PC-9 (cell line): ENCODE measurements at regions of chr18 and their contacts with region 1.

Region 1: GRCh38 chr18:1104181-1104881 is 199.7 kb downstream of the ADCYAP1 start:
- DNase-seq: no peak
- H3K4me3 ChIP-seq: no peak overlapping the region
- H3K27ac ChIP-seq: no peak overlapping the region
- H3K4me1 ChIP-seq: no peaks in the 10 kb centered on the region
- H3K27me3 ChIP-seq: no peaks in the 10 kb centered on the region
- CTCF ChIP-seq: no peak

Region 2: GRCh38 chr18:1018181-1018681 is 86.1 kb before region 1 on chr18:
- CTCF ChIA-PET with region 1: no interaction called
- POLR2A ChIA-PET with region 1: no interaction called
- intact Hi-C with region 1: no loop called
- DNase-seq: no peak
- H3K4me3 ChIP-seq: no peak overlapping the region
- H3K27ac ChIP-seq: no peak overlapping the region
- H3K4me1 ChIP-seq: peaks cover 10% of the 10 kb centered on the region
- H3K27me3 ChIP-seq: no peaks in the 10 kb centered on the region
- CTCF ChIP-seq: no peak

Region 3: DNA sequence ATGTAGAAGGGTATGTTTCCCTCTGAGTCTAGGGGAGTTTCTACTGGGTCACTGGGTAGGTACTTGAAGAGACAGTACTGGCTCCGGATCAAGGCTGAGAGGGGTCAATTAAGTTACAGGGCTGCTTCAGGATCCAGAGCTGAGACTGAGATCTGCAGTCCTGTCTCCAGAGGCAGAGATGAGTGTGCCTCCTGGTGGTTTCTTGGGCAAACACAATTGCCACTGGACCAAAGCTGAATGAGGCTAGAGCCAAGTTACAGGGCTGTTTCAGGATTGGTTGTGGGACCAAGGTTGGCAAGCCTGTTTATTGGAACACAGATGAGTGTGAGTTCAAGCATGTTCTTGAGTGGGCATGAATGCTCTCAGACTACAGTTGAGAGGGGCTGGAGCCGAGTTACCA is 41.7 kb before region 1 on chr18:
- CTCF ChIA-PET with region 1: no interaction called
- POLR2A ChIA-PET with region 1: no interaction called
- intact Hi-C with region 1: no loop called
- DNase-seq: no peak
- H3K4me3 ChIP-seq: no peak overlapping the region
- H3K27ac ChIP-seq: no peak overlapping the region
- H3K4me1 ChIP-seq: no peaks in the 10 kb centered on the region
- H3K27me3 ChIP-seq: no peaks in the 10 kb centered on the region
- CTCF ChIP-seq: no peak

Region 4: GRCh38 chr18:1173593-1173992 is 69.3 kb after region 1 on chr18:
- CTCF ChIA-PET with region 1: no interaction called
- POLR2A ChIA-PET with region 1: no interaction called
- intact Hi-C with region 1: loop called (anchors 10 kb)
- DNase-seq: no peak
- H3K4me3 ChIP-seq: no peak overlapping the region
- H3K27ac ChIP-seq: no peak overlapping the region
- H3K4me1 ChIP-seq: no peaks in the 10 kb centered on the region
- H3K27me3 ChIP-seq: no peaks in the 10 kb centered on the region
- CTCF ChIP-seq: no peak